Right cardiac atrium (tissue), 5 donors: ENCODE measurements at regions of chr17 and their contacts with region 1.

Region 1: DNA sequence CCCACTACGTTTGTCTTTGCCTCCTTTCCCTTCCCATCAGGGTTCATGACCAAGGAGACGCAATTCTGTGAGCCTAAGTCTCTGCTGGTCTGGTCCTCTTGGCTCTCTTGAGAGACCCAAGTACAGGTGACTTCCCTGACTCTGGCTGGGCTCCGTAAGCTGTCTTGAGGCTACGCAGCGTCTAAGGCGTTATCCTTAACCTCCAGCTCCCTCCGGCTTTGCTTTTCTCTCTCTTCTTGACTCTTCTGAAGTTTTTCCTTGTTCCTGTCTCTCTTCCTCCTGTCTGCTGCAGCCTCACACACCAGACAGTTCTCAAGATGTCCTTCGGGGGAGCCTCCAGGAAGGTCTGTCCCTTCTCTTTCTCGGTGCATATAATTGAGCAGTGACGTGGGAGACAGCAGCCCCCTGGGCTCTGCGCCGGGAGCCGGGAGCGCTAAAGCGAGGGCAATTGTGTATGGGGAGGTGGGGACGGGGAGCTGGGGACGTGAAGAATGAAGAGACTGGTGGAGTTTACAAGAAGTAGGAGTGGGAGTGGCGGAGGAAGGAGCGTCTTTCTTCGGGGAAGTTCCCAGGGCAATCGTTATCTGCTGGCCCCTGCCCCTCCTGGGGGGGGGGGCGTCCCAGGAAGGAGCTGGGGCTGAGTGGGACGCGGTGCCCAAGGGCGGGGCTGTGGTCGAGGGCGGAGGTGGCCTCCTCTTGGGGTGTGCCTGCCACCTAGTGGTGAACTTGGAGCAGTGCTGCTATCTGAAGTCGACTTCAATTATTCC is 6.9 kb upstream of the PIRT start:
- DNase-seq: peak; percentile 78 to 90 (median 86)
- ATAC-seq: peak; percentile 95
- H3K4me3 ChIP-seq: peak overlapping the region; percentile 67
- H3K27ac ChIP-seq: no peak overlapping the region
- H3K4me1 ChIP-seq: no peaks in the 10 kb centered on the region
- H3K27me3 ChIP-seq: no peaks in the 10 kb centered on the region

Region 2: DNA sequence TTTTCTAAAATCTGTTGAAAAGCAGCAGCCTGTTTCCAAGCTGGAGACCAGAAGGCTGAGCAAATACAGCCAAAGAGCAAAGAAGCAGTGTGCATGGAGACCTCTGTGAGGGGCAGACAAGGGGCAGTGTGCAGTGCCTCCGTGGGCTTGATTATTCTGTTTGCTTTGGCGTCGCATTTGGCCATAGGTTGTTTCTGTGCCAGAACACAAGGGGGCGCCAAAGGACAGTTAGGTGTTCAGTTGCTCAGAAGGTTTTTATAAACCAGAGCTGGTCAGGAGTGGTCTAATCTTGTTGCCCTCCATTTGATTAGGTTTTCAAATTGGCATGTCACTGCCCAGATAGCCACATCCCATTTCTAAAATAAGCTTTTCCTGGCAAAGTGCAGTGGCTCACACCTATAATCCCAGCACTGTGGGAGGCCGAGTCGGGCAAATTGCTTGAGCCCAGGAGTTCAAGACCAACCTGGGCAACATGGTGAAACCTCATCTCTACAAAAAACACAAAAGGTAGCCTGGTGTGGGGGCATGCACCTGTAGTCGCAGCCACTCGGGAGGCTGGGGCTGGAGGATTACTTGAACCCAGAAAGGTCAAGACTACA is 198.3 kb before region 1 on chr17:
- intact Hi-C with region 1: loop called in 2 of 4 experiments (anchors 5 to 10 kb)
- DNase-seq: peak; percentile 53 to 82 (median 78)
- ATAC-seq: peak; percentile 56 to 71
- H3K4me3 ChIP-seq: no peak overlapping the region
- H3K27ac ChIP-seq: no peak overlapping the region
- H3K4me1 ChIP-seq: no peaks in the 10 kb centered on the region
- H3K27me3 ChIP-seq: no peaks in the 10 kb centered on the region

Region 3: GRCh38 chr17:10729334-10730193 is 115.2 kb before region 1 on chr17 and contains the start of gene TMEM220:
- intact Hi-C with region 1: loop called in 1 of 4 experiments (anchors 10 kb)
- DNase-seq: peak; percentile 89 to 94 (median 93)
- ATAC-seq: peak; percentile 97 to 98
- H3K4me3 ChIP-seq: peak within 1 kb of the TSS; percentile 42
- H3K27ac ChIP-seq: peak within 1 kb of the TSS; percentile 75
- H3K4me1 ChIP-seq: no peaks in the 10 kb centered on the region
- H3K27me3 ChIP-seq: no peaks in the 10 kb centered on the region
- total RNA-seq, gene TMEM220: 7.7 to 15.2 (median 9.0) TPM

Region 4: GRCh38 chr17:10737168-10737622 is 107.6 kb before region 1 on chr17:
- intact Hi-C with region 1: loop called (anchors 2 to 10 kb)
- DNase-seq: peak in 2 of 3 donors; percentile 59 to 76
- ATAC-seq: peak; percentile 80 to 85
- H3K4me3 ChIP-seq: no peak overlapping the region
- H3K27ac ChIP-seq: no peak overlapping the region
- H3K4me1 ChIP-seq: no peaks in the 10 kb centered on the region
- H3K27me3 ChIP-seq: no peaks in the 10 kb centered on the region